ENCODE measurements at regions of chr18 and their contacts with region 1.

Region 1: GRCh38 chr18:77108001-77108692 is 24.4 kb downstream of the MBP start:
- DNase-seq: no peak
- ATAC-seq: peak; percentile 7
- H3K4me3 Mint-ChIP-seq: peak overlapping the region; percentile 41
- H3K27ac Mint-ChIP-seq: peak overlapping the region; percentile 73
- H3K4me1 Mint-ChIP-seq: peaks cover 91% of the 10 kb centered on the region
- H3K27me3 Mint-ChIP-seq: no peaks in the 10 kb centered on the region

Region 2: GRCh38 chr18:77054606-77055428 is 53.3 kb before region 1 on chr18:
- CTCF ChIA-PET with region 1: interaction called, 7 read pairs
- POLR2A ChIA-PET with region 1: interaction called, 10 read pairs
- DNase-seq: peak; percentile 93
- ATAC-seq: peak; percentile 91
- H3K4me3 Mint-ChIP-seq: peak overlapping the region; percentile 85
- H3K27ac Mint-ChIP-seq: peak overlapping the region; percentile 100
- H3K4me1 Mint-ChIP-seq: peaks cover 71% of the 10 kb centered on the region
- H3K27me3 Mint-ChIP-seq: no peaks in the 10 kb centered on the region

Region 3: GRCh38 chr18:77079954-77080682 is 28.0 kb before region 1 on chr18:
- CTCF ChIA-PET with region 1: no interaction called
- POLR2A ChIA-PET with region 1: no interaction called
- DNase-seq: no peak
- ATAC-seq: peak; percentile 76
- H3K4me3 Mint-ChIP-seq: peak overlapping the region; percentile 34
- H3K27ac Mint-ChIP-seq: peak overlapping the region; percentile 74
- H3K4me1 Mint-ChIP-seq: peaks cover 82% of the 10 kb centered on the region
- H3K27me3 Mint-ChIP-seq: no peaks in the 10 kb centered on the region

Measured in activated CD8-positive, alpha-beta T cell treated with anti-CD3 and anti-CD28 coated beads, Interleukin-2, amount 10 ng/mL, durations not matched to agents 7 days and 5 days (primary cell).